Right cardiac atrium (tissue), 5 donors: ENCODE measurements at regions of chr19 and their contacts with region 1.

Region 1: DNA sequence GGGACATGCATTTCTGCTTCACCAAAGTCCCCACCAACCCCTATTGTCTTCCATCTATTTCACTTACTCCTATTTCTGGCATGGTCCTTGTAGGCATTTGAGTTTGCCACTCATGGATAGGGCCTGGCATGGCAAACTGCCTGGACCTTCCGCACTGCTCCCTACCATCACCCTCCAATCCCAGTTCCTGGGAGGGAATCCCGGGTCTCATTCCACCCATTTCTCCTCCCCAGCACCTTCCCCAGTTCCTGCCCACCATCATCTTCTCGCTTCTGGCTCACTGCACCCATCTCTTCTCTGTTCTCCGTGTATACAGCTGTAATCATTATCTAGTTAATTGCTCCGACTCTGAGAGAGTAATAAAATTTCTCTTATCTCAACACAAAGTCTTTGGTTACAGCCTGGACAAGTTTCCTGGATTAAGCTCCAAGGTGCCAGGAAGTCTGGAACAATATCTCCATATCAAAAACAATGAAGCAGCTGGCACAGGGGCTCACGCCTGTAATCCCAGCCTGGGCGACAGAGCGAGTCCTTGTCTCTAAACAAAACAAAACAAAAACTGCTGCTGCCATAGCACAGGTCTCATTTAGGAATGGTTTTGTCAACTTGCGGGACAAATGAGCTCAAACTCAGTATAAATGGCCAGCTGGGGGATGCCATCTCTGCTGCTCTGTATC is 17.0 kb upstream of the COX7A1 start:
- DNase-seq: peak in 2 of 3 donors; percentile 24 to 73
- ATAC-seq: peak; percentile 69 to 82
- H3K4me3 ChIP-seq: no peak overlapping the region
- H3K27ac ChIP-seq: peak overlapping the region; percentile 94
- H3K4me1 ChIP-seq: peaks cover 5% of the 10 kb centered on the region
- H3K27me3 ChIP-seq: no peaks in the 10 kb centered on the region

Region 2: GRCh38 chr19:36060430-36060829 is 108.8 kb before region 1 on chr19:
- intact Hi-C with region 1: loop called in 2 of 4 experiments (anchors 5 kb)
- DNase-seq: peak; percentile 31 to 75 (median 70)
- ATAC-seq: peak; percentile 67 to 73
- H3K4me3 ChIP-seq: no peak overlapping the region
- H3K27ac ChIP-seq: no peak overlapping the region
- H3K4me1 ChIP-seq: no peaks in the 10 kb centered on the region
- H3K27me3 ChIP-seq: no peaks in the 10 kb centered on the region

Region 3: GRCh38 chr19:36103626-36104552 is 65.3 kb before region 1 on chr19:
- intact Hi-C with region 1: no loop called
- DNase-seq: no peak
- ATAC-seq: no peak
- H3K4me3 ChIP-seq: no peak overlapping the region
- H3K27ac ChIP-seq: no peak overlapping the region
- H3K4me1 ChIP-seq: peaks cover 2% of the 10 kb centered on the region
- H3K27me3 ChIP-seq: no peaks in the 10 kb centered on the region

Region 4: DNA sequence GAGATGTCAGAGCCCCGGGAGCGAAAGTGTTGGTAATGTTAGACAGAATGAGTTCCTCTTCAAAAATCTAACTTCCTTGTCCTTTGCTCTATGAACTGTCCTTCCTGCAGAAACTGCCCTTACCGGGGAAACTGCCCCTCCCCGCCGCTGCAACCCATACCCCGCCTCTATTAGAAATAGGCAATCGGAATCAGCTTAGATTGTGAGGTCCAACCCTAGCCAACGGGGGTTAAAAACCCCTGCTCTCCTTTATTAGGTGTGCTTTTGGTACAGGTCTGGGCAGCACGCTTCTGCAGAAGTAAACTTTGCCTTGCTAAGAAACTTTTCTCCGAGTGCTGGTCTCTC is 40.9 kb before region 1 on chr19:
- intact Hi-C with region 1: loop called (anchors 1 to 5 kb)
- DNase-seq: no peak
- ATAC-seq: peak; percentile 27 to 34
- H3K4me3 ChIP-seq: peak overlapping the region; percentile 44
- H3K27ac ChIP-seq: peak overlapping the region; percentile 94
- H3K4me1 ChIP-seq: no peaks in the 10 kb centered on the region
- H3K27me3 ChIP-seq: no peaks in the 10 kb centered on the region